ENCODE measurements at regions of chr1 and their contacts with region 1.

Region 1: GRCh38 chr1:172609528-172609927 is 49.4 kb upstream of the FASLG start:
- DNase-seq: no peak
- H3K4me3 Mint-ChIP-seq: no peak overlapping the region
- H3K27ac Mint-ChIP-seq: no peak overlapping the region
- H3K4me1 Mint-ChIP-seq: peaks cover 24% of the 10 kb centered on the region
- H3K27me3 Mint-ChIP-seq: no peaks in the 10 kb centered on the region

Region 2: DNA sequence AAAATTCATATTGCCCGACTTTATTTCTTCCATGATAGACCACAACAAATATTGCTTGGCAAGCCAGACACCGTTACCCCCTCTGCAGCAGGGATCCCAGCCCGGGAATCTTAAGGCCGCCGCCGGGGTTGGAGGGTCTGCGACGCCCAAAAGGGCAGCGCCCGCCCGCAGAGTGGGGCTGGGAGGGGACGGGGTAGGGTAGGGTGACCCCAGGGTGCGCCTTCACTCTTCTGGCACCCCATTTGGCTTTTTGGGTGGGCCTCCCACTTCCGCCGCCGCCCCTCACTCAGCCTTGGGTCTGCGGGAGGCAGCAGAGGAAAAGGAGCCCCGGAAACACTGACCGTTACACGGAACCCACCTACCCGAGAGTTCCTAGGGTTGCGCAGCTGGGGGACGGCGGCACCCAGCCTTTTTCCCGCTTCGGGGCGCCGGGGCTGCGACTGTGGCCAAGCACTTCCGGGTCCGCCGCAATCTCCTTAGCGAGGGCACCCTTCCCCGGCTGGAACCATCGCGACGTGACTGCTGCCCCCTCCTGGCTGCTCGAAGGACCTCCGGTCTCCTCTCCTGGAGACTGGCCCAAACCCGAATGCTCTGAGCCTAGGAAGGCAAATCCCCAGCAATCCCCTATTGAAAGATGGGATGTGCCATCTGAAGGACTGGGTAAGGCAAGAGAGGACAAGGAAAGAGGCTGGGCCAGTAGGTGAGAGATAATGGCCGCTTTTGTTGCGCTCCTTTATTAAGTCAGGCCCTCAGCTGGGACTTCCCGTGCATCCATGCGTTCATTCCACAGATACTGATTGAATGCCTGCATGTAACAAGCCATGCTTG is 165.7 kb before region 1 on chr1 and contains the start of gene PIGC:
- intact Hi-C with region 1: no loop called
- DNase-seq: peak; percentile 85
- H3K4me3 Mint-ChIP-seq: peak within 1 kb of the TSS; percentile 94
- H3K27ac Mint-ChIP-seq: peak within 1 kb of the TSS; percentile 86
- H3K4me1 Mint-ChIP-seq: peaks cover 33% of the 10 kb centered on the region
- H3K27me3 Mint-ChIP-seq: no peaks in the 10 kb centered on the region
- total RNA-seq, gene PIGC: 22.6 and 23.3 TPM in 2 replicates

Region 3: GRCh38 chr1:172627702-172628101 is 18.2 kb after region 1 on chr1:
- intact Hi-C with region 1: loop called (anchors 2 kb)
- DNase-seq: no peak
- H3K4me3 Mint-ChIP-seq: no peak overlapping the region
- H3K27ac Mint-ChIP-seq: no peak overlapping the region
- H3K4me1 Mint-ChIP-seq: peaks cover 43% of the 10 kb centered on the region
- H3K27me3 Mint-ChIP-seq: peaks cover 5% of the 10 kb centered on the region

Region 4: DNA sequence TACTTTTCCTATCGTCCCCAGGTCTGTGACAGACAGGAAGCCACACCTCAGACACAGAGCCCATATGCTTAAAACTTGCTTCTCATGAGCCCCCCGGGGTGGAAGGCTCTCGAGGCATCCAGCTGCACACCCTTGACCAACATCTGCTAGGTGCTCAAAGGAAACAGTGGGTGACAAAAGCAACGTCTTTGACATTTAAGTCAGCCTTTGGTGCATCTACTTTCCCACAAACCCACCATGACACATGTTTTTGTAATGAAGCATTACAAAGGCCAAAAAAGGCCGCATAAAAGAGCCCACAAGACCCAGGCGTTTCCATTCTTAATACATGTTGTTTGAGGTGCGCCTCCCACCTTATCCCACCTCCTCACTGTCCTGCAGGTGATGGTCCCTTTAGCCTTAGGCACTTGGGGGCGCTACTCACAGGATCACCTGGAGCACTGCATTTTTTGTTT is 37.6 kb after region 1 on chr1:
- intact Hi-C with region 1: loop called (anchors 5 kb)
- DNase-seq: no peak
- H3K4me3 Mint-ChIP-seq: peak overlapping the region; percentile 27
- H3K27ac Mint-ChIP-seq: peak overlapping the region; percentile 74
- H3K4me1 Mint-ChIP-seq: peaks cover 84% of the 10 kb centered on the region
- H3K27me3 Mint-ChIP-seq: peaks cover 2% of the 10 kb centered on the region

Region 5: DNA sequence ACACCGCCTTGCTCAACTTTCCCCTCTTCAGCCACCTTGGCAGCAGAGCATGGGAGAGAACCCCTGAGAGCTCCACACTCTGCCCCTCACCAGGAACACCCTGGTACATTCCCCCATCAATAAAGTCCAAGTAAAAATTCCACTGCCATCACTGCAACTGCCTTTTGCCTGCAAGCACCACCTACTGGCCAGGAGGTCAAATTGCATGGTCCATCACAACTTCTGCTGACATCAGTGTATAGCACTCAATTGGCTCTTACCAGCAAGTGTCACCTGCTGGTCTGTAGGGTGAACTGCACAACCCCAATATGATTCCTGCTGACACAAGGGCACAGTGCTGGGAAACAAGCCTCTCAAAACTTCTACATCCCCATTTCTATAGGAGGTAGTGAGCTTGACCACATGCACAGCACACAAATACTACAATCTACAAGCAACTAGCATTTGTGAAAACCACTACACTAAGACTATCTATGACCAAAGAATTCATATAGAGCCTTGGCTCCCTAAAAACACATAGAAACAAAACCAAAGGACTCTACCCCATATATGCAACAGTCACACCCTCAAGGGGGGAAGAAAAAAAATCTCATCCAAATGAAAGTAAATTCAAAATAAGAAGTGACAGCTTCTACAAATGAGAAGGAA is 118.6 kb after region 1 on chr1:
- intact Hi-C with region 1: loop called (anchors 1 kb)
- DNase-seq: peak; percentile 37
- H3K4me3 Mint-ChIP-seq: no peak overlapping the region
- H3K27ac Mint-ChIP-seq: no peak overlapping the region
- H3K4me1 Mint-ChIP-seq: peaks cover 18% of the 10 kb centered on the region
- H3K27me3 Mint-ChIP-seq: peaks cover 15% of the 10 kb centered on the region